ENCODE measurements at regions of chr4 and their contacts with region 1.

Region 1: DNA sequence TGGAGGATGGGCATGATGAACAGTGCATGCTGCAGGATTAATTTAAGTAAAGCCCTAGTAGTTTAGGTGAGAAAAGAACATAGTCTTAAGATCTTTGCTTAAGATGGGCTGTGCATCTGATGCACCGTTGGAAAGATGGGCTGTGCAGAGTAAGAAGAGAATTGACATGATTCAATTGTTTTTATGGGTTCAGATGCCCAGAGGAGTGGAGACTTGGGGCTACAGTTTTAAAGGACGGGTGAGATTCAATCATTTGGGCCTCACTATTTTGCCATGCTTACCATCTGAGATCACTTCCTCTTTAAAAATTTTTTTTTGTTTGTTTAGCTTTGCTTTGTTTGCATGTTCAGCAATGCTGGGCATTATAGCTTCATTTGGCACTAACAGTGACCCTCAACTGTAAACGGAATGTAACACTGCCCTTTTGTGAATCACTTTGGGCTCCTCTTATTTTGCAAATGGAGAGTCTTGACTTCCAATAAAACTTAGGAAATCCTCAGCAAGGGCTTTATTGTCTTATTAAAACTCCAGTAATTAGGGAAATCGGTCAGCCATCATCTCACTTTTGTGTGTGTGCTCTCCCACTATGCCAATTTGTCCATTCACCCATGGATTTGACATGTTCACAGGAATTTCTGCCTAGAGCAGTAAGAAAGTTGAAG is 216.1 kb upstream of the TLL1 start:
- DNase-seq: no peak
- ATAC-seq: no peak
- H3K4me3 ChIP-seq: no peak overlapping the region
- H3K27ac ChIP-seq: no peak overlapping the region
- H3K4me1 ChIP-seq: peaks cover 44% of the 10 kb centered on the region
- H3K27me3 ChIP-seq: no peaks in the 10 kb centered on the region
- CTCF ChIP-seq: no peak
- EP300 ChIP-seq: no peak
- POLR2A ChIP-seq: no peak
- RAD21 ChIP-seq: no peak

Region 2: DNA sequence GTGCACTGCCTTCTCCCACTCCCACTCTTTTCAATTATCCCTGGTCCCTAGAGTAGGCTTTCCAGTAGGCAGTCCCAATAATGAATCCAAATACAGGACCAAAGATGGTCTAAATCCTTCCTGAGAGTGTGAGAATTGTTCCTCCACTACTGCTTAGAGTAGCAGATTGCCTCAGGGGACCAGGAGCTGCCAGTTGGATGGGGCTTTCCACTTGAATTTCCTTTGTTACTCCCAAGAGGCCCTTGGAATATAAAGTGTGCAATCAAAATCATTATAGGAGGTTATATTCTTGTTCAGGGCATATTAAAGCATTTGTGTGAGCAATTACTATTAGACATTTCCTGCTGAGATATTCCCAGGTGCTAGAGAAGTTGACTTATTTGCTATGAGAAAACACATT is 59.5 kb after region 1 on chr4:
- CTCF ChIA-PET with region 1: no interaction called
- POLR2A ChIA-PET with region 1: no interaction called
- in situ Hi-C with region 1: no loop called
- intact Hi-C with region 1: no loop called
- DNase-seq: no peak
- ATAC-seq: no peak
- H3K4me3 ChIP-seq: no peak overlapping the region
- H3K27ac ChIP-seq: no peak overlapping the region
- H3K4me1 ChIP-seq: no peaks in the 10 kb centered on the region
- H3K27me3 ChIP-seq: no peaks in the 10 kb centered on the region
- CTCF ChIP-seq: no peak
- EP300 ChIP-seq: no peak
- POLR2A ChIP-seq: no peak
- RAD21 ChIP-seq: no peak

Region 3: GRCh38 chr4:165855191-165855590 is 198.2 kb after region 1 on chr4:
- CTCF ChIA-PET with region 1: no interaction called
- POLR2A ChIA-PET with region 1: no interaction called
- in situ Hi-C with region 1: no loop called
- intact Hi-C with region 1: loop called (anchors 10 kb)
- DNase-seq: no peak
- ATAC-seq: no peak
- H3K4me3 ChIP-seq: no peak overlapping the region
- H3K27ac ChIP-seq: no peak overlapping the region
- H3K4me1 ChIP-seq: no peaks in the 10 kb centered on the region
- H3K27me3 ChIP-seq: no peaks in the 10 kb centered on the region
- CTCF ChIP-seq: no peak
- EP300 ChIP-seq: no peak
- POLR2A ChIP-seq: no peak
- RAD21 ChIP-seq: no peak

Measured in HepG2 (cell line).